Transverse colon (tissue), 4 donors: ENCODE measurements at regions of chr14 and their contacts with region 1.

Region 1: GRCh38 chr14:104137297-104138097 is 890 bp upstream of the KIF26A start:
- DNase-seq: peak; percentile 73
- H3K4me3 ChIP-seq: peak overlapping the region; percentile 32 to 55 (median 43)
- H3K27ac ChIP-seq: peak overlapping the region in 3 of 4 donors; percentile 9 to 57 (median 36)
- H3K4me1 ChIP-seq: peaks cover 12 to 49% (median 45%) of the 10 kb centered on the region in 4 donors
- H3K27me3 ChIP-seq: peaks cover 74% of the 10 kb centered on the region
- CTCF ChIP-seq: peak; percentile 59 to 96 (median 87)
- EP300 ChIP-seq: no peak
- POLR2A ChIP-seq: no peak

Region 2: DNA sequence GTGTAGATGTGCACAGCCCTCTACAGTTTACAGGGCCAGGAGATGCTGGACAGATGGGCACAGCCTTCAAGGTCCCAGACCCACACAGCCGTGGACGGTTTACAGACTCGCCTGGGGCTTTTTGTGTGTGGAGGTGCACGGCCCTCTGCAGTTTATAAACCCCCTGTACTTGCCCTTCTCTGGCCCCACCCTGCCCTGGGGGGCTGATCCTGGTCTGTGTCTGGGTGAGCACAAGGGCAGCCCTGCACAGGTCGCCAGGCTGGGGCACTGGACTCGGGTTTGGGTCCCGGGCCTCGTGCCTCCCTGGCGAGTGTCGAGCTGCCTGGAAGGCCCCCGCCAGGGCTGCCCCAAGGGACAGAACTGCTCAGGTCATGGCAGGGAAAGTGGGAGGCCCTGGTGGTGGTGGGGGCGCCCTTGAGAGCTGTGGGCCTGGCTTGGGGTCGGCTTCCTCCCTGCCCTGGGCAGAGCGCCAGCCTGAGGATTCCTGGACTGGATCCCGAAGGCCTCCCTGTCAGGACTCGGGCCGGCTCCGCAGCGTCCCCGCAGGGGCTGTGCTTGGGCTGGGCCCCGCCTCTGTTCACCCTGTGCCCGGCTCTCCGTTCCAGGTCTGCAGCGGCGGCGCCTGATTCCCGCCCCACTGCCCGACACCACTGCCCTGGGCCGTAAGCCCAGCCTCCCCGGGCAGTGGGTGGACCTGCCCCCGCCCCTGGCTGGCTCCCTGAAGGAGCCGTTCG is 40.6 kb after region 1 on chr14:
- in situ Hi-C with region 1: no loop called
- intact Hi-C with region 1: loop called (anchors 1 kb)
- DNase-seq: no peak
- H3K4me3 ChIP-seq: no peak overlapping the region
- H3K27ac ChIP-seq: no peak overlapping the region
- H3K4me1 ChIP-seq: no peaks in the 10 kb centered on the region
- H3K27me3 ChIP-seq: no peaks in the 10 kb centered on the region
- CTCF ChIP-seq: no peak
- EP300 ChIP-seq: no peak
- POLR2A ChIP-seq: no peak

Region 3: GRCh38 chr14:104563742-104564615 is 426.5 kb after region 1 on chr14:
- in situ Hi-C with region 1: loop called (anchors 25 kb)
- intact Hi-C with region 1: loop called (anchors 1 kb)
- DNase-seq: peak; percentile 71
- H3K4me3 ChIP-seq: no peak overlapping the region
- H3K27ac ChIP-seq: no peak overlapping the region
- H3K4me1 ChIP-seq: peaks cover 0 to 6% (median 0%) of the 10 kb centered on the region in 4 donors
- H3K27me3 ChIP-seq: peaks cover 61% of the 10 kb centered on the region
- CTCF ChIP-seq: peak; percentile 65 to 89 (median 81)
- EP300 ChIP-seq: no peak
- POLR2A ChIP-seq: no peak

Region 4: DNA sequence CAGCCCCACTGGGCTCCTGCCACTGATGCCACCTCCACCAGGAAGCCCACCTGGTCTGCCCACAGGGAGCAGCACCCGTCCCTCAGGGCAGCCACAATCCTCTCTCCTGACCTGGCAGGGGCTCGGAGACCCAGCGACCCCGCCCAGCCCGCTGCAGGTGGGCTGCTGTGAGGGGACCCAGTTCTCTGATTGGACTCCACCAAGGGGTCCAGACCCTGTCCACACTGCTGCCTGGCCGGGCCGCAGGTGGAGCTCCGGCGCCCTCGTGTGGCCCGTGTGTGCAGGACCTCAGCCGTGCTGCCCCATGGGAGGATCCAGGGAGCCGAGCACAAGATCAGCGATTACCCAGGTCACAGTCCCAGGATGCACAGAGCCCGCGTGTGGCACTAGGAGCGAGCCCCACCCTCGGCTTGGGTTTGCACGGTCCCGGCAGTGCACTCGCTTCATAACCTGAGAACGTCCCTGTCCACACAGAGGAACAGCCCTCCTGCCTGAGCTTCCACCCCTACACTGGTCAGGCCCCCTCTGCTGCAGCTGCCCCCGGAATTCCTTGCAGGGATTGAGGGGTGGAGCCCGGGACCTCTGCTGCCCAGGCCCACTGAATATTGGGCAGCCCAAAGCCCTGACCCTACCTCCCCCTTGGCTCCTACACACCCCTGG is 502.5 kb after region 1 on chr14:
- in situ Hi-C with region 1: no loop called
- intact Hi-C with region 1: loop called (anchors 5 kb)
- DNase-seq: peak; percentile 66
- H3K4me3 ChIP-seq: no peak overlapping the region
- H3K27ac ChIP-seq: no peak overlapping the region
- H3K4me1 ChIP-seq: peaks cover 0 to 3% (median 0%) of the 10 kb centered on the region in 4 donors
- H3K27me3 ChIP-seq: peaks cover 45% of the 10 kb centered on the region
- CTCF ChIP-seq: peak; percentile 79 to 89 (median 87)
- EP300 ChIP-seq: no peak
- POLR2A ChIP-seq: no peak